Mucosa of descending colon (tissue), 3 donors: ENCODE measurements at regions of chr10 and their contacts with region 1.

Region 1: GRCh38 chr10:118720685-118721538 is 33.9 kb downstream of the CACUL1 start:
- DNase-seq: peak in 1 of 3 donors; percentile 92
- ATAC-seq: peak; percentile 68
- H3K4me3 ChIP-seq: no peak overlapping the region
- H3K4me1 ChIP-seq: no peaks in the 10 kb centered on the region
- CTCF ChIP-seq: peak; percentile 73

Region 2: GRCh38 chr10:118568327-118568848 is 152.5 kb before region 1 on chr10:
- intact Hi-C with region 1: loop called (anchors 5 kb)
- DNase-seq: peak in 1 of 3 donors; percentile 85
- ATAC-seq: peak; percentile 66
- H3K4me3 ChIP-seq: no peak overlapping the region
- H3K4me1 ChIP-seq: no peaks in the 10 kb centered on the region
- CTCF ChIP-seq: no peak

Region 3: GRCh38 chr10:118669020-118669791 is 51.7 kb before region 1 on chr10:
- intact Hi-C with region 1: no loop called
- DNase-seq: peak in 1 of 3 donors; percentile 37
- ATAC-seq: peak; percentile 39
- H3K4me3 ChIP-seq: no peak overlapping the region
- H3K4me1 ChIP-seq: no peaks in the 10 kb centered on the region
- CTCF ChIP-seq: no peak